Esophagus muscularis mucosa (tissue), 4 donors: ENCODE measurements at regions of chr7 and their contacts with region 1.

Region 1: DNA sequence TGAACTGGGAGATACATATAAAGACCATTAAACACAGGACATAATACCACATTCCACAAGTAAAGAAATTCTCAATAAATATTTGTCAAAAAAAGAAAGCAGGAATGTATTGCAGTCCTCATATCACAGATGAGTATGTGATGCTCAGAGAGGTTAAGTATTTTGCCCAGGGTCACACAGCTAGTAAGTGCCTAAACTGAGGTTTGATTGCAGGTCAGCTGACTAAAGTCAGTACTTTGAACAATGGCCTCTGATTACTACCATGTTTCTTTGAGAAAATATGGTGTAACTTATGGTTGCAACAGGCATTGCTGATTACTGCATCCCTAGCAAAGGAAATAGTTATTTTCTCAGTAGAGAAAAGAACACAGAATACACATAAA is 267.1 kb downstream of the ELMO1 start:
- DNase-seq: no peak
- H3K4me3 ChIP-seq: no peak overlapping the region
- H3K27ac ChIP-seq: no peak overlapping the region
- H3K4me1 ChIP-seq: peaks cover 0 to 20% (median 17%) of the 10 kb centered on the region in 4 donors
- H3K27me3 ChIP-seq: no peaks in the 10 kb centered on the region
- CTCF ChIP-seq: no peak
- EP300 ChIP-seq: no peak
- POLR2A ChIP-seq: no peak

Region 2: GRCh38 chr7:36967387-36967786 is 214.2 kb before region 1 on chr7:
- intact Hi-C with region 1: loop called (anchors 2 kb)
- DNase-seq: no peak
- H3K4me3 ChIP-seq: no peak overlapping the region
- H3K27ac ChIP-seq: peak overlapping the region; percentile 29 to 64 (median 56)
- H3K4me1 ChIP-seq: peaks cover 6 to 60% (median 48%) of the 10 kb centered on the region in 4 donors
- H3K27me3 ChIP-seq: no peaks in the 10 kb centered on the region
- CTCF ChIP-seq: peak; percentile 77 to 89 (median 85)
- EP300 ChIP-seq: no peak
- POLR2A ChIP-seq: no peak

Region 3: GRCh38 chr7:37259319-37259821 is 77.8 kb after region 1 on chr7:
- intact Hi-C with region 1: no loop called
- DNase-seq: no peak
- H3K4me3 ChIP-seq: no peak overlapping the region
- H3K27ac ChIP-seq: no peak overlapping the region
- H3K4me1 ChIP-seq: no peaks in the 10 kb centered on the region
- H3K27me3 ChIP-seq: no peaks in the 10 kb centered on the region
- CTCF ChIP-seq: no peak
- EP300 ChIP-seq: no peak
- POLR2A ChIP-seq: no peak

Region 4: GRCh38 chr7:37391791-37392672 is 210.5 kb after region 1 on chr7:
- intact Hi-C with region 1: no loop called
- DNase-seq: no peak
- H3K4me3 ChIP-seq: no peak overlapping the region
- H3K27ac ChIP-seq: peak overlapping the region in 3 of 4 donors; percentile 5 to 44 (median 6)
- H3K4me1 ChIP-seq: peaks cover 11 to 42% (median 12%) of the 10 kb centered on the region in 4 donors
- H3K27me3 ChIP-seq: no peaks in the 10 kb centered on the region
- CTCF ChIP-seq: no peak
- EP300 ChIP-seq: no peak
- POLR2A ChIP-seq: no peak